ENCODE measurements at regions of chr12 and their contacts with region 1.

Region 1: DNA sequence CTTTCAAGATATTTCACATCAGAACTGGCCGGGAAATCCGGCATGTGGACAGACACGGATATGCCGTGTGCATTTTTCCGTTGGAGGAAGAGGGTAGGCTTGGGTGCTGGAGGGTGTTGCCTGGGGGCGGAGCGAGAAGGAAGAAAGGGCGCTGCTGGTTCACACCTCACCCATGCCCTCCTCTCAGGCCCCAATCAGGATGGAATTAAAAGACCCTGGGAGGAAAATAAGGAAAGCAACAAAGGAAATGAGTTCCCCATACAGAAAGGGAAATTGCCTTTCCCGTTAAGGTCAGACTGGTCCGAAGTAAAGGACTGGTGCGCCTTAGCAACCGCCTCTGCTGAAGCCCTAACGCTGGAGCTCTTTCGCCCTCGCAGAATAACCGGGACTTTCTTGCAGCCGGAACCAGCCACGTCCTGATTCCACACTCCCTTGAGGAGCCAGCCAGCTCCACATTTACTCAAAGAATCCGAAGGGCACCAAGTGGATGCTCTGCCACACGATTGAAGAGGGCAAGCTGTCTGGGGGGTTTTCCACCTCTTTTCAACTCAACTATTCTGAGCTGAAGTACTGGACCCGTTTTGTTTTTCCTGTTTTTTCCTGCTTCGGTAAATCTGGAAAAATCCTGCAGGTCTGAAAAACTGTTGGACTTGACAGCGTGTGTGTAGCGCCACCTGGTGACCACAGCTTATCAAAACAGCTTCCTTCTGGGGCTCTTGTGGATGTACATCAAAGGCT is 37.7 kb upstream of the BCL2L14 start:
- DNase-seq: peak; percentile 74
- ATAC-seq: peak; percentile 82
- H3K4me3 Mint-ChIP-seq: peak overlapping the region; percentile 56
- H3K27ac Mint-ChIP-seq: peak overlapping the region; percentile 79
- H3K4me1 Mint-ChIP-seq: peaks cover 26% of the 10 kb centered on the region
- H3K27me3 Mint-ChIP-seq: no peaks in the 10 kb centered on the region
- CTCF ChIP-seq: peak; percentile 89

Region 2: GRCh38 chr12:11545484-11546330 is 487.3 kb before region 1 on chr12:
- CTCF ChIA-PET with region 1: interaction called, 12 read pairs
- POLR2A ChIA-PET with region 1: no interaction called
- intact Hi-C with region 1: no loop called
- DNase-seq: peak; percentile 68
- ATAC-seq: peak; percentile 82
- H3K4me3 Mint-ChIP-seq: peak overlapping the region; percentile 72
- H3K27ac Mint-ChIP-seq: peak overlapping the region; percentile 97
- H3K4me1 Mint-ChIP-seq: peaks cover 51% of the 10 kb centered on the region
- H3K27me3 Mint-ChIP-seq: no peaks in the 10 kb centered on the region
- CTCF ChIP-seq: peak; percentile 25

Region 3: GRCh38 chr12:11581179-11581755 is 451.8 kb before region 1 on chr12:
- CTCF ChIA-PET with region 1: interaction called, 239 read pairs
- POLR2A ChIA-PET with region 1: no interaction called
- intact Hi-C with region 1: loop called (anchors 1 kb)
- DNase-seq: peak; percentile 87
- ATAC-seq: no peak
- H3K4me3 Mint-ChIP-seq: no peak overlapping the region
- H3K27ac Mint-ChIP-seq: no peak overlapping the region
- H3K4me1 Mint-ChIP-seq: peaks cover 10% of the 10 kb centered on the region
- H3K27me3 Mint-ChIP-seq: peaks cover 6% of the 10 kb centered on the region
- CTCF ChIP-seq: peak; percentile 75

Region 4: GRCh38 chr12:11812586-11813427 is 220.2 kb before region 1 on chr12:
- CTCF ChIA-PET with region 1: interaction called, 11 read pairs
- POLR2A ChIA-PET with region 1: no interaction called
- intact Hi-C with region 1: no loop called
- DNase-seq: peak; percentile 15
- ATAC-seq: peak; percentile 67
- H3K4me3 Mint-ChIP-seq: no peak overlapping the region
- H3K27ac Mint-ChIP-seq: no peak overlapping the region
- H3K4me1 Mint-ChIP-seq: peaks cover 29% of the 10 kb centered on the region
- H3K27me3 Mint-ChIP-seq: no peaks in the 10 kb centered on the region
- CTCF ChIP-seq: no peak

Region 5: GRCh38 chr12:12008931-12009611 is 23.9 kb before region 1 on chr12:
- CTCF ChIA-PET with region 1: interaction called, 53 read pairs
- POLR2A ChIA-PET with region 1: interaction called, 18 read pairs
- intact Hi-C with region 1: loop called (anchors 2 kb)
- DNase-seq: peak; percentile 84
- ATAC-seq: peak; percentile 61
- H3K4me3 Mint-ChIP-seq: peak overlapping the region; percentile 65
- H3K27ac Mint-ChIP-seq: peak overlapping the region; percentile 87
- H3K4me1 Mint-ChIP-seq: peaks cover 70% of the 10 kb centered on the region
- H3K27me3 Mint-ChIP-seq: peaks cover 2% of the 10 kb centered on the region
- CTCF ChIP-seq: peak; percentile 33

Region 6: GRCh38 chr12:12070674-12071656 is 37.9 kb after region 1 on chr12 and contains the start of gene BCL2L14:
- CTCF ChIA-PET with region 1: interaction called, 12 read pairs
- POLR2A ChIA-PET with region 1: no interaction called
- intact Hi-C with region 1: no loop called
- DNase-seq: peak; percentile 24
- ATAC-seq: peak; percentile 84
- H3K4me3 Mint-ChIP-seq: peak within 1 kb of the TSS; percentile 77
- H3K27ac Mint-ChIP-seq: peak within 1 kb of the TSS; percentile 90
- H3K4me1 Mint-ChIP-seq: peaks cover 22% of the 10 kb centered on the region
- H3K27me3 Mint-ChIP-seq: no peaks in the 10 kb centered on the region
- CTCF ChIP-seq: no peak
- total RNA-seq, gene BCL2L14: 3.7 to 5.1 TPM

Region 7: DNA sequence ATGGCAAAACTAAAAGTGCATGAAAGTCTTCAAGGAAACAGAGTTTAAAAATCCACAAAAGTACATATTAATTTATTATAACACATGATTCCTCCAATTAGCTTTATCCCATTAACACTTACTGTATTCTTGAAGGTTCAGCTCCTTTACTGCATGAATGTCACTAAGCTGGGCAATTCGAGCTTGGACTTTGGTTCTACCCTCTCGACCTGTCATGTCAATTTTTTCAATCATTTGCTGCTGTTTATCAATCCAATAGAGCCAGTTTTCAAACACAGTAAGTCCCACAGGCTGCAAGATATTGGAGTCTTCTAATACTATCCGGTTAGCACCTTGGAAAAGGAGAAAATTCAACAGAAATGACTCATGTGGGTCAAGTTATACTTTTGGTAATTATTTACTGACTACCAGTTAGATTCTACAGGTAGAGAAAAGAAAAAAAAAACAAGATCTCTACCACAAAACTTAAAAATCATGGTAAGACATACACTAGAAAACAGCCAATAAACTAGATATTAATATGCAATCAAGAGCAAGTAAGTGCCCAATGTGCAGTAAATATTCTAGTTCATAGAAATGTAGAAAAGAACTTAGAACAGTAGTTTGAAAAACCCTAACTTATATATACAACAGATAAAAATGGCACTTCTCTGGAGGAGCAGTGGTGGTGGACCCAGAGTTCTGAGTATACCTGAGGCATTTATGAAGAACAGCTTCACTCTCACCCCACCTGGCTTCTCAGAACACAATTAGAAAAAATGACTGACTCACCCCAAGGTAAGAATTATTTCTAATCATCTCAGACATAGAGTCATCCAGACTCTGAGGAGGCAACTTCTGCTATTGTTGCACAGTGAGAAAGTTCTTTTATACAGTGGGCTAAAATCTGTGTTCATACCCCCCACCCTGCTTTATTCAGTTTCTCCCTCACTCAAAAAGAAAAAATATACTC is 105.5 kb after region 1 on chr12:
- CTCF ChIA-PET with region 1: no interaction called
- POLR2A ChIA-PET with region 1: no interaction called
- intact Hi-C with region 1: no loop called
- DNase-seq: no peak
- ATAC-seq: no peak
- H3K4me3 Mint-ChIP-seq: no peak overlapping the region
- H3K27ac Mint-ChIP-seq: no peak overlapping the region
- H3K4me1 Mint-ChIP-seq: no peaks in the 10 kb centered on the region
- H3K27me3 Mint-ChIP-seq: peaks cover 2% of the 10 kb centered on the region
- CTCF ChIP-seq: no peak

Region 8: DNA sequence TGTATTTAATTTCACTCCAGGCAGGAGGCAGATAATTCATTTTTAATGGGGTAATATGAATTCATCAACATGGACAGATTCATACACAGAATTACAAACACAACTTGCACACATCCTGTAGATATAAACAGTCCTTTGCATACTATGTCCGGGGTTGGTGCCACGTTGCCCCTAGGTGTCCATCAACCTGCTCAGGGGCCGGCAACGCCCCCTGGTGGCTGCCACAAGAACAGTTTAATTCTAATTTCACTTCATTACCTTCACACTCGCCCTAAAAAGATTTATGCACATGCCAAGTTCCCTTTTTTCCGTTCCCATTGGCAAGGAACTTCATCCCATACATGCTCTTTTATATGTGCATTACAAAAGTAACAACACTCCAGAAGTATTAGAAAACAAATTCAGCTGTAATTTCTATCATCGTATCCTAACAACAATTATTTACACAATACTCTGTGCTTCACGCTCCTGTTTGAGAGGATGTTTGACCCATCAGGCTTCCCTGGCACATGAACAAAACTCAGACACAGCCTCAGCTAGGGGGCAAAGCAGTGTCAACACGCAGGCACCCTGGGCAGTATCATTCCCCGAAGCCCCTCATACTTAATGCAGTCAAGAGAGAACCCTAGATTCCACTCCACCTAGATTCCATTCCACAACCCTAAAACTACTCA is 301.5 kb after region 1 on chr12:
- CTCF ChIA-PET with region 1: interaction called, 77 read pairs
- POLR2A ChIA-PET with region 1: no interaction called
- intact Hi-C with region 1: loop called (anchors 5 kb)
- DNase-seq: peak; percentile 77
- ATAC-seq: peak; percentile 90
- H3K4me3 Mint-ChIP-seq: no peak overlapping the region
- H3K27ac Mint-ChIP-seq: no peak overlapping the region
- H3K4me1 Mint-ChIP-seq: peaks cover 21% of the 10 kb centered on the region
- H3K27me3 Mint-ChIP-seq: no peaks in the 10 kb centered on the region
- CTCF ChIP-seq: peak; percentile 93

Region 9: DNA sequence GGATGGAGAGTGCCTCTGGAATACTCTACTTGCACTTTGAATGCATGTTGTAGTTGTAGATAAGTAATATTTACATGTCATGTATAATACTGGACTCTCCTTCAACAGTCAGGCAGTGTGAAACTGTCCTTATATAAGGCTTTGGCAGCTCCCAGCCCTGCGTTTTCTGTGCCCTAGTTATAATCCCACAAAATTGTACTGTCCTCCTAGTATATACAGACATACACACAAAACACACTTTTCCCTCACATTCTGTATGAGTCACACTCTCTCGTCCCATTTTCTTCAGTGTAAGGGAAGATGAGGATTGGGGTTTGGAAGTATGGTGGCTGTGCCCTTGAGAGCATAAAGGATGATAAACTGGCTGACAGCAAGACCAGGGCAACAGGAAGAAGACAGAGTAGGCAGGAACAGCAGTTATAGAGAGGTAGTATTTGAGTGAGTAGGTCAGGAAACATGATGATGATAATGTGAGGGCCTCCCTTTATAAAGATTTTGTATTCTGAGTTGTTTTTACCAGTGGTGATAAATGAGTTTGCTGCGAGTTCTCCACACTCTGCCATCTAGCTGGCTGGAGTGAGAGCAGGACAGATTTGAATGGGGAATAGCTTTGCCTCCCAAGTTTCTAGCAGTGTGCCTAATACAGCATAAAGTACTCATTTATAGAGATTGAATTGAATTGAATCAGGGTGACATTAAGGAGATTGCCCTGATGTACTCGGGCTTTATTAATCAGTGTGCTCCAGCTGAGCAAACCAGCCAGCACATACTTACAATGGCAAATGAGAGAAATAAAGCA is 583.7 kb after region 1 on chr12:
- CTCF ChIA-PET with region 1: no interaction called
- POLR2A ChIA-PET with region 1: no interaction called
- intact Hi-C with region 1: no loop called
- DNase-seq: no peak
- ATAC-seq: peak; percentile 35
- H3K4me3 Mint-ChIP-seq: no peak overlapping the region
- H3K27ac Mint-ChIP-seq: peak overlapping the region; percentile 82
- H3K4me1 Mint-ChIP-seq: peaks cover 55% of the 10 kb centered on the region
- H3K27me3 Mint-ChIP-seq: no peaks in the 10 kb centered on the region
- CTCF ChIP-seq: no peak

Measured in activated CD8-positive, alpha-beta T cell treated with anti-CD3 and anti-CD28 coated beads for 36 hours (primary cell).